ENCODE measurements at regions of chr4 and their contacts with region 1.

Region 1: GRCh38 chr4:88284439-88285234 is at the start of gene PPM1K:
- DNase-seq: peak; percentile 98
- ATAC-seq: peak; percentile 96
- H3K4me3 ChIP-seq: peak within 1 kb of the TSS; percentile 74
- H3K27ac ChIP-seq: peak within 1 kb of the TSS; percentile 55
- H3K4me1 ChIP-seq: peaks cover 3% of the 10 kb centered on the region; the same call in 1 of the 2 replicates
- H3K27me3 ChIP-seq: peaks cover 3% of the 10 kb centered on the region; the same call in 1 of the 2 replicates
- CTCF ChIP-seq: peak; percentile 22; the same call in 1 of the 2 replicates
- POLR2A ChIP-seq: peak; percentile 54
- RAD21 ChIP-seq: no peak
- total RNA-seq, gene PPM1K: 11.5 and 11.9 TPM in 2 replicates

Region 2: DNA sequence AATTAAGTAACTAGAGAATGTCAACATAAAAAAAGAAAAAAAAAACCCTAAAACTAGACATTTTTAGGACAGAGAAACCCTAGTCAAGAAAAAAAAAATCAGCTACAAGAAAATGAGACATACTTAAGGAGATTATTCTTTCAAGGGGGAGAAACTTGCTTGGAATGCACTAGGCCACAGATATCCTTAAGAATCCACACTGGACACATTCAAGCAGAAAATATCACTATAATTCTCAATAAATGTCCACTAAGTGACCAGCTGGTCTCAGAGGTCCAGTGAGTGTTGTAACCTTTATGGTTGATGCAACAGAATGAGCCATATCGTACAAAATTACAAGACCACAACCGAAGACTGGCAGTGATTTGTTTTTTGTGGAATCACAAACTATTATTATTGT is 500.9 kb before region 1 on chr4:
- CTCF ChIA-PET with region 1: no interaction called
- POLR2A ChIA-PET with region 1: no interaction called
- dilution Hi-C with region 1: no loop called
- in situ Hi-C with region 1: no loop called
- intact Hi-C with region 1: no loop called
- DNase-seq: no peak
- ATAC-seq: no peak
- H3K4me3 ChIP-seq: no peak overlapping the region
- H3K27ac ChIP-seq: no peak overlapping the region
- H3K4me1 ChIP-seq: no peaks in the 10 kb centered on the region
- H3K27me3 ChIP-seq: no peaks in the 10 kb centered on the region
- CTCF ChIP-seq: no peak
- POLR2A ChIP-seq: no peak
- RAD21 ChIP-seq: no peak

Region 3: DNA sequence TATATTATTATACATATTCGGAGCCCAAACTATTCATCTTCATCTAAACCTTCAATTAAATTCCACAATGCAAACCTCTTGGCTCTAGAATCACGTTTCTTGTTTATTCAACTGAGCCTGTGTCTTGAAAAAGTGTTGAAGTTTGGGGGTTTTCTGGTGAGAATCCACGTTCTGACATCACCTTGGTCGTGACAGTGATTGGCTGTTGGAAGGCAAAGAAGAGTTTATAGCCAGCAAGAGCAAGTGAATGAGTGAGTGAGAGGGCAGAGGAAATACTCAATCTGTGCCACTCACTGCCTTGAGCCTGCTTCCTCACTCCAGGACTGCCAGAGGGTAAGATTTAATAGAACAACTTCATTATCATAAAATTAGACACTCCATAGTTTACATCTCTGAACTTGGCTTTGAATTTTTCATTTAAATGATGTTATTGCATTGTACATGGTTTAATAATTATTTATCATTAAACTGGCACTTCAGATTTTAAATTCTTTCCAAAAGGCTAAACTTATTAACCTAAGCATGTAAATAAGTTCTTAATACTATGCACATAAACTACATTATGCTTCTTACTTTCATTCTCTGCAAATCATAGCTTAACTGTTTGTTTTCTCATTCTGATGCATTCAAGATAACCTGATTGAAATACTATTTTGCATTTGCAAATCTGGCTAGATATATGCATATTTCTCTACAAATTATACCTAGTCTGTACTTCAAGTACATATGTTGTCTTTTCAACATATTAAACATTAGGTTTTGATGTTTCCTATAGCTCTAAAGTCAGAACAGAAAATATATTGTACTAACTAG is 485.1 kb before region 1 on chr4 and contains the start of gene IBSP:
- CTCF ChIA-PET with region 1: no interaction called
- POLR2A ChIA-PET with region 1: no interaction called
- dilution Hi-C with region 1: no loop called
- in situ Hi-C with region 1: no loop called
- intact Hi-C with region 1: no loop called
- DNase-seq: no peak
- ATAC-seq: no peak
- H3K4me3 ChIP-seq: no peak within 1 kb of the TSS
- H3K27ac ChIP-seq: no peak within 1 kb of the TSS
- H3K4me1 ChIP-seq: no peaks in the 10 kb centered on the region
- H3K27me3 ChIP-seq: no peaks in the 10 kb centered on the region
- CTCF ChIP-seq: no peak
- POLR2A ChIP-seq: no peak
- RAD21 ChIP-seq: no peak
- total RNA-seq, gene IBSP: not detected in 2 replicates

Region 4: GRCh38 chr4:88054901-88055300 is 229.7 kb before region 1 on chr4:
- CTCF ChIA-PET with region 1: no interaction called
- POLR2A ChIA-PET with region 1: no interaction called
- dilution Hi-C with region 1: no loop called
- in situ Hi-C with region 1: no loop called
- intact Hi-C with region 1: loop called (anchors 10 kb)
- DNase-seq: peak; percentile 72
- ATAC-seq: peak; percentile 99
- H3K4me3 ChIP-seq: no peak overlapping the region
- H3K27ac ChIP-seq: no peak overlapping the region
- H3K4me1 ChIP-seq: no peaks in the 10 kb centered on the region
- H3K27me3 ChIP-seq: no peaks in the 10 kb centered on the region
- CTCF ChIP-seq: peak; percentile 64
- POLR2A ChIP-seq: no peak
- RAD21 ChIP-seq: peak; percentile 81

Region 5: DNA sequence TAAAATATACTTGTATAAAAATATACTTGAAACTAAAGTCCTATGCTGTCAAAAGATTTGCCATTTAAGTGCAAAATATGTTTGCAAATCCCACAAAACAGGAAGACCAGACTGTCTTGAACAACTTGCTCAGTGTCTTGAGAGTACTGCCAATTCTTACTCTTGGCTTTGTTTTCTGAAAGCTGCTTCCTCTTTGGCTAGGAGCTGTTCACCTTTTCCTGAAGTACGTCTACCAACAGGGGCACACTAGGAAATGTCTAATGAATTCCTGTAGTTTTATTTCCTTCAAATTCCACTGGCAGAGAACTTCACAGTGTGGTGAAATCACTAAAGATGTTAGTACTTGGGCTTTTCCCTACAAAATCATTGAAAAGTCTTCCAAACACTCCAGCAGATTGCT is 79.8 kb before region 1 on chr4:
- CTCF ChIA-PET with region 1: no interaction called
- POLR2A ChIA-PET with region 1: no interaction called
- dilution Hi-C with region 1: no loop called
- in situ Hi-C with region 1: no loop called
- intact Hi-C with region 1: no loop called
- DNase-seq: no peak
- ATAC-seq: no peak
- H3K4me3 ChIP-seq: no peak overlapping the region
- H3K27ac ChIP-seq: no peak overlapping the region
- H3K4me1 ChIP-seq: no peaks in the 10 kb centered on the region
- H3K27me3 ChIP-seq: no peaks in the 10 kb centered on the region
- CTCF ChIP-seq: no peak
- POLR2A ChIP-seq: no peak
- RAD21 ChIP-seq: no peak

Region 6: DNA sequence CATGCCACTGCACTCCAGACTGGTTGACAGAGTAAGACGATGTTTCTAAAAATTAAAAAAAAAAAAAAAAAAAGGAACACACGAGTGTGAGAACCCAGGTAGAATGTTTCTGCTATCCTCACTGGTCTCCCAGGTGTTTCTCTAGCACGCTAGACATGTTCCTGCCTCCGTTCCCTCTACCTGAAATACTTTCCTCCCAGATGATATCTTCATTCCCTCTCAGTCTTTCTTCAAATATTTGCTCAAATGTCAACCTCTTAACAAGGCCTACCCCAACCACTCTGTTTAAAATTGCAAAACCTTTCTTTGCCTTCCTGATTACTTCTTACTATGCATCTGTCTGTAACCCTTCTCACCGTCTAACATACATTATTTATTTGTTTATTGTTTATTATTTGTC is 66.7 kb before region 1 on chr4:
- CTCF ChIA-PET with region 1: interaction called, 3 read pairs
- POLR2A ChIA-PET with region 1: no interaction called
- dilution Hi-C with region 1: no loop called
- in situ Hi-C with region 1: no loop called
- intact Hi-C with region 1: loop called (anchors 2 kb)
- DNase-seq: no peak
- ATAC-seq: no peak
- H3K4me3 ChIP-seq: no peak overlapping the region
- H3K27ac ChIP-seq: no peak overlapping the region
- H3K4me1 ChIP-seq: no peaks in the 10 kb centered on the region
- H3K27me3 ChIP-seq: peaks cover 6% of the 10 kb centered on the region
- CTCF ChIP-seq: no peak
- POLR2A ChIP-seq: no peak
- RAD21 ChIP-seq: no peak

Region 7: GRCh38 chr4:88341227-88342192 is 56.9 kb after region 1 on chr4:
- CTCF ChIA-PET with region 1: no interaction called
- POLR2A ChIA-PET with region 1: interaction called, 3 read pairs
- dilution Hi-C with region 1: no loop called
- in situ Hi-C with region 1: no loop called
- intact Hi-C with region 1: loop called (anchors 5 kb)
- DNase-seq: peak; percentile 95
- ATAC-seq: peak; percentile 99
- H3K4me3 ChIP-seq: no peak overlapping the region
- H3K27ac ChIP-seq: no peak overlapping the region
- H3K4me1 ChIP-seq: no peaks in the 10 kb centered on the region
- H3K27me3 ChIP-seq: no peaks in the 10 kb centered on the region; the same call in 1 of the 2 replicates
- CTCF ChIP-seq: no peak
- POLR2A ChIP-seq: no peak
- RAD21 ChIP-seq: no peak

Region 8: DNA sequence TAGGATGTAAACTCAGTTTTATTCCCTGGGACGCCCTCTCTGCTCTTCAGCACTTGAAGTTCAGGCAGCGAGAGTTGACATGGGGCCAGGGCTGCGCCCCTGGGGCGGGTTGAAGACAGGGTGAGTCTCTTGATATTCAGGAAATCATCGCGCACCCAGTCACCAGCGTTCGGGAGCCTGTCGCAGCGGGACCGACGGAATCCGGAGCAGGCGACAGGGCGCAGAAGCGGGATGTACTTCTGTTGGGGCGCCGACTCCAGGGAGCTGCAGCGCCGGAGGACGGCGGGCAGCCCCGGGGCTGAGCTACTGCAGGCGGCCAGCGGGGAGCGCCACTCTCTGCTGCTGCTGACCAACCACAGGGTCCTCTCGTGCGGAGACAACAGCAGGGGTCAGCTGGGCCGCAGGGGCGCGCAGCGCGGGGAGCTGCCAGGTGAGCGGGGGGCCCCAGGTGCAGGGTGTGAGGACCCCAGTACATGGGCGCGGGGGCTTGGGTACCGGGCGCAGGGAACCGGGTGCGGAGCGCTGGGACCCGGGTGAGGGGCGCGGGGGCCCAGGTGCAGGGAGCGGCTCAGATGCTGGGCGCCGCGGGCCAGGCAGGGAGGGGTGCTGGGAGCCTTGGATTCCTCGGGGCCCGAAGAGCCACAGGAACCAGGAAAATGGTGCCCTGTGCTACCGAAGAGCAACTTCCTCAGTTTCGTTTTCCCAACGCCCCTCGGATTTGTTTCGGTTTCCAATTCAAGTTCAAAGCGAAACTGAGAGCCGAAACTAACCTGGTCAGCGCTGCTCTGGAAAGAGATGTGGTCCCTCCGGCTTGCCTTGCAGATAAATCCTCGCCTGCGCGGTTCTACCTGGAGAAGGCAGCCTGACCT is 94.3 kb after region 1 on chr4 and contains the start of gene HERC6:
- CTCF ChIA-PET with region 1: no interaction called
- POLR2A ChIA-PET with region 1: no interaction called
- dilution Hi-C with region 1: no loop called
- in situ Hi-C with region 1: no loop called
- intact Hi-C with region 1: loop called (anchors 5 kb)
- DNase-seq: peak; percentile 78
- ATAC-seq: peak; percentile 99
- H3K4me3 ChIP-seq: peak within 1 kb of the TSS; percentile 66
- H3K27ac ChIP-seq: peak within 1 kb of the TSS; percentile 27
- H3K4me1 ChIP-seq: no peaks in the 10 kb centered on the region
- H3K27me3 ChIP-seq: peaks cover 5% of the 10 kb centered on the region
- CTCF ChIP-seq: peak; percentile 54
- POLR2A ChIP-seq: no peak
- RAD21 ChIP-seq: no peak
- total RNA-seq, gene HERC6: 0.83 and 1.6 TPM in 2 replicates

Region 9: DNA sequence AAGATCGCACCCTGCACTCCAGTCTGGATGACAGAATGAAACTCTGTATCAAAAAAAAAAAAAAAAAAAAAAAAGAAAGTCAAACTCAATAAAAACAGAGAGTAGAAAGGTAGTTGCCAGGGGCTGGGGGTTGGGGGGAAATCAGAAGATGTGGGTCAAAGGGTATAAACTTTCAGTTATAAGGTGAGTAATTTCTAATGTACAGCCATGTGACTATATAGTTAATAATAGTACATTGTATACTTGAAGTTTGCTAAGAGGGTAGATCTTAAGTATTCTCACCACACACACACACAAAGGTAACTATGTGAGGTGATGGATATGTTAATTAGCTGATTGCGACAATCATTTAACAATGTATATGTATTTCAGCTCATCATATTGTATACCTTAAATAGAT is 105.5 kb after region 1 on chr4:
- CTCF ChIA-PET with region 1: no interaction called
- POLR2A ChIA-PET with region 1: no interaction called
- dilution Hi-C with region 1: no loop called
- in situ Hi-C with region 1: no loop called
- intact Hi-C with region 1: no loop called
- DNase-seq: no peak
- ATAC-seq: no peak
- H3K4me3 ChIP-seq: no peak overlapping the region
- H3K27ac ChIP-seq: no peak overlapping the region
- H3K4me1 ChIP-seq: no peaks in the 10 kb centered on the region
- H3K27me3 ChIP-seq: no peaks in the 10 kb centered on the region; the same call in 1 of the 2 replicates
- CTCF ChIP-seq: no peak
- POLR2A ChIP-seq: no peak
- RAD21 ChIP-seq: no peak

Region 10: DNA sequence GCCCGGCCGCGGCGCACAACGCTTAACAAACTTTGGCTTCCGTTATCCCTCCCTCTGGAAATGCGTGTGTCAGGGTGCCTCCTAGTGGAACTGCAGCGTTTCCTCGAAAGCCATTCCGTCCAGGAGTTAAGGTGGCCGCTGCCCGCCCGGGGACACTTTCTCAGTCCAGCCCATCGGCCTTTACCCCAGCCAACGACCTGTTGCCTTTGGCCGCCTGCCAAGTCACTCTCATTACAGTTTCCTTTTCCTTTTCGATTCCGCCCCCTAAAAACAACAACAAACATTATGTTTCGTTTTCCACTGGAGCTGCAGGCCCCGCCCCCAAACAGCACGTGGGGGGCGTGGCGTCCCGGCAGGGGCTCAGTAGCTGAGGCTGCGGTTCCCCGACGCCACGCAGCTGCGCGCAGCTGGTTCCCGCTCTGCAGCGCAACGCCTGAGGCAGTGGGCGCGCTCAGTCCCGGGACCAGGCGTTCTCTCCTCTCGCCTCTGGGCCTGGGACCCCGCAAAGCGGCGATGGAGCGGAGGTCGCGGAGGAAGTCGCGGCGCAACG is 172.2 kb after region 1 on chr4 and contains the start of gene HERC5:
- CTCF ChIA-PET with region 1: no interaction called
- POLR2A ChIA-PET with region 1: no interaction called
- dilution Hi-C with region 1: no loop called
- in situ Hi-C with region 1: no loop called
- intact Hi-C with region 1: loop called (anchors 5 kb)
- DNase-seq: peak; percentile 81
- ATAC-seq: peak; percentile 94
- H3K4me3 ChIP-seq: peak within 1 kb of the TSS; percentile 59
- H3K27ac ChIP-seq: no peak within 1 kb of the TSS
- H3K4me1 ChIP-seq: no peaks in the 10 kb centered on the region
- H3K27me3 ChIP-seq: peaks cover 22% of the 10 kb centered on the region
- CTCF ChIP-seq: peak; percentile 57
- POLR2A ChIP-seq: no peak
- RAD21 ChIP-seq: peak; percentile 60
- total RNA-seq, gene HERC5: under 0.01 TPM in 2 replicates